Adrenal gland (tissue), 19 donors: ENCODE measurements at regions of chrX and their contacts with region 1.

Region 1: DNA sequence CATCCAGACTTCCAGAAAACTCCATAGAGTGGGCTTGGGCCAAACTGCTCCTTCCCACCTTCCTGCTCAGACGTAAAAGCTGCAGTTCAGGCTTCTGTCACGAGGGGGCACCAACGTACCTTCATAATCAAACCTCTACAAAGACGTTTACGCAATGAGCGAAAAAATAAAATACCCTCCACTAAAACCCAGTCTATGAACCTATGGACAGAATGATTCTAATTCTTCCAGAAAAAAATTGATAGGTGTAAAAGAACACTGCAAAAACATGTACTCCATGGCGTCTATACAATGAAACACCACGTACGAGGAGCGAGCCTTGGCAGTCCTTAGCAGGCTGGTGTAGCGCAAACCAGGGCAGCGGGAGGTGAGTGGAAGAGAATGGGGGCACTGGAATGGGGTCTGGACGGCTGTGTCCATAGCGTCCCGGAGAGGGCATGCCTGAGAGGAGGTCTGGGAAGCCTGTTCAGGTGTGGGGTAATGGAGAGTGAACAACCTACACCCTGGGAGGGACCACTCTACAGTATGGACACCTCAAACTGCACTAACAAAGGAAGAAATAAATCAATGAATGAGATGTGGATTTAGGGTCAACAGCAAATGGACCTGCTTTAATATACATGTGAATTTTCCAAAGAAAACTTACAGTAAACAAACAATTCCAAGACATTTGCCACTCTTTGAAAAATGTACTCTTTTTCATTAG is 14.4 kb upstream of the RAB40A start:
- DNase-seq: peak; percentile 57 to 93 (median 84)
- H3K4me3 ChIP-seq: peak overlapping the region in 1 of 4 donors; percentile 51
- H3K27ac ChIP-seq: peak overlapping the region in 2 of 5 donors; percentile 27 to 59
- H3K4me1 ChIP-seq: no peaks in the 10 kb centered on the region
- H3K27me3 ChIP-seq: peaks cover 3% of the 10 kb centered on the region
- CTCF ChIP-seq: peak; percentile 72 to 81 (median 78)
- POLR2A ChIP-seq: no peak

Region 2: GRCh38 chrX:103585411-103586313 is 52.0 kb after region 1 on chrX and contains the start of gene TCEAL4:
- intact Hi-C with region 1: no loop called
- DNase-seq: peak; percentile 44 to 78 (median 61)
- H3K4me3 ChIP-seq: peak within 1 kb of the TSS in 3 of 4 donors; percentile 8 to 70 (median 45)
- H3K27ac ChIP-seq: peak within 1 kb of the TSS; percentile 30 to 92 (median 76)
- H3K4me1 ChIP-seq: peaks cover 0 to 4% of the 10 kb centered on the region in 2 donors
- H3K27me3 ChIP-seq: no peaks in the 10 kb centered on the region
- CTCF ChIP-seq: no peak
- POLR2A ChIP-seq: peak in 1 of 2 donors; percentile 56
- total RNA-seq, gene TCEAL4: 64.9 to 158 (median 135) TPM

Region 3: DNA sequence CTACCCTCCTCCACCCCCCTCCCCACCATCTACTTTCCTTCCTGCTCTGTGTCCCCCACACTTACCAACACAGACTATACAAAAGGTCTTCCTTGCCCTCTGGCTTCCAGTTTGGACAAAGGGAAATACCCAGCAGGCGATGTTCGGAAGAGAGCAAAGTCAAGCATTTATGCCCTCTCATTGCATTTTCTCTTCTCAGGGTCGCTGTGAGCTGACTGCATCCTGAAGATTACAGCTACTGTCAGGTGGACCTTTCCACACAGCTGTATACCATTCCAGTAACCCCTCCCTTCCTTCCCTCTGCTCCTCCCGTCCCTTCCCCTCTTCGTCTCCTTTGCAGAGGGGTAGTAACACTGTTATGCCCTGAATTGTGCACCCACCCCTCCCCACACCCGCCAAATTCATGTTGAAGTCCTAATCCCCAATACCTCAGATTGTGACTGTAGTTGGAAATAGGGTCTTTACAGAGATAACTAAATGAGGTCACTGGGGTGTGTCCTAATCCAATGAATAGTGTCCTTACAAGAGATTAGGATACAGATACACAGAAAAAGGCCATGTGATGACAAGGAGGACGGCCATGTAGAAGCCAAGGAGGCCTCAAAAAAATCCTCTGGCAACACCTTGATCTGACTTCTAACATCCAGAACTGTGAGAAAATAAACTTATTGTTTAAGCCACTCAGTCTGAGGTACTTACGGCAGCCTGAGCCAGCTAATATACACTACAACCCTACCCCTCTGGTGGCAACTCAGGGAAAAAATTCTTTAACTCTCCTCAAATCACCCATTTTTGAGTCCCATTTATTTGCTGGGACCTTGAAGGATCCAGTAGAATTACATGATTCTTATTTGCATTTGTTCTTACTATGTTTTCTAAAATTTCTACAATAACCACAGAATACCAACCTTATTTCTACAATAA is 141.1 kb after region 1 on chrX:
- intact Hi-C with region 1: loop called in 1 of 2 experiments (anchors 10 kb)
- DNase-seq: no peak
- H3K4me3 ChIP-seq: no peak overlapping the region
- H3K27ac ChIP-seq: no peak overlapping the region
- H3K4me1 ChIP-seq: no peaks in the 10 kb centered on the region
- H3K27me3 ChIP-seq: no peaks in the 10 kb centered on the region
- CTCF ChIP-seq: no peak
- POLR2A ChIP-seq: no peak

Region 4: DNA sequence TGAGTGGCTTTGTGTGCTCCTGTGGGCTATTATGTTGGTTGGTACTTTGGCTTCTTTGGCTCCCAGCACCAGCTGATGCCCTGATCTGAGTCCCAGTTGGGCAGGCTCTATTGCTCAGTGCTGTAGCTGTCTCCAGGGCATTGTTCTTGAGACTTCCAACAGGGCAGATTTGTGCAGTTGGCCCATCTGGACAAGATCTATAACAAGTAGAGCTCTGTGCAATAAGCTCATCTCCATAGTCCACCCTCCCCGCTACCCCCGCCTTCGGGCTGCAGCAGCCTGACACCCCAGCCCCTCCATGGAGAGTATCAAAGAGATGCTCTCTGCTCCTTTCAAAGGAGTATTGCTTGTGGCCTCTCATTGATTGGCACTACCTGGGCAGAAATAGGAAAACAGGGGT is 171.2 kb after region 1 on chrX:
- intact Hi-C with region 1: loop called in 1 of 2 experiments (anchors 10 kb)
- DNase-seq: no peak
- H3K4me3 ChIP-seq: no peak overlapping the region
- H3K27ac ChIP-seq: no peak overlapping the region
- H3K4me1 ChIP-seq: no peaks in the 10 kb centered on the region
- H3K27me3 ChIP-seq: no peaks in the 10 kb centered on the region
- CTCF ChIP-seq: no peak
- POLR2A ChIP-seq: no peak

Region 5: GRCh38 chrX:103817502-103817901 is 283.8 kb after region 1 on chrX:
- intact Hi-C with region 1: loop called in 1 of 2 experiments (anchors 5 kb)
- DNase-seq: peak in 1 of 7 donors; percentile 20
- H3K4me3 ChIP-seq: no peak overlapping the region
- H3K27ac ChIP-seq: no peak overlapping the region
- H3K4me1 ChIP-seq: no peaks in the 10 kb centered on the region
- H3K27me3 ChIP-seq: peaks cover 5% of the 10 kb centered on the region
- CTCF ChIP-seq: peak; percentile 47 to 93 (median 66)
- POLR2A ChIP-seq: no peak